Activated naive CD4-positive, alpha-beta T cell treated with anti-CD3 and anti-CD28 coated beads for 36 hours (primary cell): ENCODE measurements at regions of chr3 and their contacts with region 1.

Region 1: GRCh38 chr3:115147329-115148141 is 447 bp upstream of the ZBTB20 start:
- DNase-seq: peak; percentile 98
- H3K4me3 Mint-ChIP-seq: peak overlapping the region; percentile 82
- H3K27ac Mint-ChIP-seq: peak overlapping the region; percentile 96
- H3K4me1 Mint-ChIP-seq: peaks cover 20% of the 10 kb centered on the region
- H3K27me3 Mint-ChIP-seq: no peaks in the 10 kb centered on the region

Region 2: GRCh38 chr3:114056130-114057010 is 1091.2 kb before region 1 on chr3 and contains the starts of genes CCDC191 and QTRT2:
- CTCF ChIA-PET with region 1: no interaction called
- intact Hi-C with region 1: loop called (anchors 1 kb)
- DNase-seq: peak; percentile 100
- H3K4me3 Mint-ChIP-seq: peak within 1 kb of the TSS; percentile 97
- H3K27ac Mint-ChIP-seq: peak within 1 kb of the TSS; percentile 95
- H3K4me1 Mint-ChIP-seq: peaks cover 36% of the 10 kb centered on the region
- H3K27me3 Mint-ChIP-seq: no peaks in the 10 kb centered on the region
- total RNA-seq, gene CCDC191: 1.8 to 2.0 TPM
- total RNA-seq, gene QTRT2: 23.0 to 27.8 TPM

Region 3: DNA sequence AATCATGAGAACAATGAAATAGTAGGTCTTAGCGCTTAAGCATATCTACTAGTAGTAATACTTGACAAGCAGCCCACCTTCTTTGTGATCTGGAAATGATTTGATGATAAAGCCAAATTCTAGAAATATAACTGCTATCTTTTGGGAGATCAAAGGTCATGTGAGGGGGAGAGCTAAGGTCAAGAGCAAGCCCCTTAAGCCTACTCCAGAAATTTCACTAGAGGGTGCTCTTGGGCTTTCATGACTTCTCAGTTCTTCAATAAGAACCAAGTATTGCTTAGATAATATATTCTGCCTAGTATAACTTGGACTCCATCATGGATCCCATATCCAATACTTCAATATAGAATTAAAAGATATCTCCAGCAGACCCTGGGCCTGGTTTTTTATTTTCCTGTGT is 320.0 kb before region 1 on chr3:
- CTCF ChIA-PET with region 1: no interaction called
- intact Hi-C with region 1: loop called (anchors 1 kb)
- DNase-seq: peak; percentile 11
- H3K4me3 Mint-ChIP-seq: no peak overlapping the region
- H3K27ac Mint-ChIP-seq: no peak overlapping the region
- H3K4me1 Mint-ChIP-seq: peaks cover 4% of the 10 kb centered on the region
- H3K27me3 Mint-ChIP-seq: no peaks in the 10 kb centered on the region

Region 4: GRCh38 chr3:115092220-115092791 is 55.2 kb before region 1 on chr3:
- CTCF ChIA-PET with region 1: interaction called, 7 read pairs
- intact Hi-C with region 1: loop called (anchors 2 kb)
- DNase-seq: peak; percentile 79
- H3K4me3 Mint-ChIP-seq: no peak overlapping the region
- H3K27ac Mint-ChIP-seq: no peak overlapping the region
- H3K4me1 Mint-ChIP-seq: peaks cover 34% of the 10 kb centered on the region
- H3K27me3 Mint-ChIP-seq: no peaks in the 10 kb centered on the region

Region 5: DNA sequence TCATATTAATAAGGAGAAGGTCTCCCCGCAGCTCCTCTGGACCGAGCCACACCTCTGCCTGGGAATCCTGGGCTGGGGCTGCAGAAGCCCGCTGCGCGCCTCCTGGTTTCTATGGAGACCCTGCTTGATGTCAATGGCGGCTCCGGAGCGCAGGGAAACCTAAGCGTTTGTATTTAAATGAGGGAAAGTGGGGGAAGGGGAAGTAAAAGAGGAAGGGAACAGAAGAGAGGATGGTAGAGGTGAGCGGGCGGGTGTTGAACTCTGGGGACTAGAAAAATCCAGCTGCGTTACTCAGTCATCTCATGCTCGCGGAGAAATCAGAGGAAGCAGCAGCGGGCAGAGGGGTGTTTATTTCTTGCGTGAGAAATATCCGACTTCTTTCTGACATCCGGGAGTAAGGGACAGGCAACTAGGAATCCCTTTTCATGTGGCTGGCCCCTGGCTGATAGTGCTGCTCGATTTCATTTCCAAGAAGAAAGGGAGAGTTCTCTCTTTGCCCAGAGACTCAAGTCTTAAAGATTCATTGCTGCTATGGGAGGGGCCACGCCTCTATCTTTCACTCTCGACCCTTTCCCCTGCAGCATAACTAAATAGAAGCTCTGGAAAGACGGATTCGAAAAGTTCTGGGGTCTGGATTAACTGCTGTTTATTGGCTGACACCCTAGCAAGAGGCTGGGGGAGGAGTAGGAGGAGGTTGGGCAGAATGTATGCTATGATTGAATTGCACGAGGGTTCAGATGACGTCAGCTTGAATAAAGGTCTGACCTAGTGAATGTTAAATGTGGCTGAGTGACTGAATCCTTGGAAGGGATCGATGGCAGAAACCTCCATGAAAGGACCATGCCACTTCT is 365.3 kb after region 1 on chr3:
- CTCF ChIA-PET with region 1: no interaction called
- intact Hi-C with region 1: loop called (anchors 5 kb)
- DNase-seq: peak; percentile 50
- H3K4me3 Mint-ChIP-seq: peak overlapping the region; percentile 83
- H3K27ac Mint-ChIP-seq: no peak overlapping the region
- H3K4me1 Mint-ChIP-seq: peaks cover 20% of the 10 kb centered on the region
- H3K27me3 Mint-ChIP-seq: peaks cover 33% of the 10 kb centered on the region